Activated CD4-positive, alpha-beta T cell treated with anti-CD3 and anti-CD28 coated beads, Interleukin-2, amount 10 ng/mL, durations not matched to agents 24 days and 14 days (primary cell): ENCODE measurements at regions of chr5 and their contacts with region 1.

Region 1: DNA sequence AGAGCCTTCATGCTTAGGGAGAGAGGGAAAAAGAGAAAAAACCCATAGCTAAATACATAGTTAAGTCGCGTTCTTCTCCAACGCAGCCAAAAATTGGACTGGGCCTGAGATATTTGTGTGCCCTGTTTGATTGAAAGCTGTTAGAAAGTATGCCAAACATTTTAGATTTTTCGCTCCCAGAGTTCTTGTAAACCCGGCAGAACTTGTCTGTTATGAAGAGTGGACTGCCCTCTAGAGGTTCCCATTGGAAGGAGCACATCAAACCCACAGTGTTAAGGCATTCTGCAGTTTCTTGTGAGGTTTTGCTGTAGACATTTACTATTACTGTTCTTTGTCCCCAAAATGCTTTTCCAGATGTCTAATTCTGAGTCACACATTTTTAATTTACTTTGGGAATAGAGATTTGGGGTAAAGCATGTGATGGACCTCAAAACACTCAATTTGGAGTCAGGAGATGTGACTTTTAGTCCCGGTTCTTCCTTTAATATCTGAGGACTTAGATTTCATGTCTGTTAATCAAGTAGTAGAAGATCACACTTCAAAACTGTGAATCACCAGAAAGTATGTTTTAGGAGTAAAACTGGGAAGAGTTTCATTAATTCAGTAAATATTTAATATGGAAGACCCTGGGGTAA is 96.6 kb downstream of the PCSK1 start:
- DNase-seq: peak; percentile 89
- H3K4me3 Mint-ChIP-seq: no peak overlapping the region
- H3K27ac Mint-ChIP-seq: no peak overlapping the region
- H3K4me1 Mint-ChIP-seq: peaks cover 13% of the 10 kb centered on the region
- H3K27me3 Mint-ChIP-seq: peaks cover 12% of the 10 kb centered on the region

Region 2: GRCh38 chr5:95781101-95781583 is 555.3 kb before region 1 on chr5:
- intact Hi-C with region 1: loop called (anchors 5 kb)
- DNase-seq: peak; percentile 90
- H3K4me3 Mint-ChIP-seq: peak overlapping the region; percentile 56
- H3K27ac Mint-ChIP-seq: no peak overlapping the region
- H3K4me1 Mint-ChIP-seq: peaks cover 16% of the 10 kb centered on the region
- H3K27me3 Mint-ChIP-seq: peaks cover 7% of the 10 kb centered on the region

Region 3: GRCh38 chr5:95892780-95893354 is 443.6 kb before region 1 on chr5:
- intact Hi-C with region 1: loop called (anchors 1 kb)
- DNase-seq: peak; percentile 82
- H3K4me3 Mint-ChIP-seq: no peak overlapping the region
- H3K27ac Mint-ChIP-seq: no peak overlapping the region
- H3K4me1 Mint-ChIP-seq: peaks cover 16% of the 10 kb centered on the region
- H3K27me3 Mint-ChIP-seq: no peaks in the 10 kb centered on the region

Region 4: GRCh38 chr5:96113170-96113939 is 223.1 kb before region 1 on chr5:
- intact Hi-C with region 1: loop called (anchors 10 kb)
- DNase-seq: peak; percentile 59
- H3K4me3 Mint-ChIP-seq: no peak overlapping the region
- H3K27ac Mint-ChIP-seq: peak overlapping the region; percentile 76
- H3K4me1 Mint-ChIP-seq: peaks cover 11% of the 10 kb centered on the region
- H3K27me3 Mint-ChIP-seq: no peaks in the 10 kb centered on the region

Region 5: DNA sequence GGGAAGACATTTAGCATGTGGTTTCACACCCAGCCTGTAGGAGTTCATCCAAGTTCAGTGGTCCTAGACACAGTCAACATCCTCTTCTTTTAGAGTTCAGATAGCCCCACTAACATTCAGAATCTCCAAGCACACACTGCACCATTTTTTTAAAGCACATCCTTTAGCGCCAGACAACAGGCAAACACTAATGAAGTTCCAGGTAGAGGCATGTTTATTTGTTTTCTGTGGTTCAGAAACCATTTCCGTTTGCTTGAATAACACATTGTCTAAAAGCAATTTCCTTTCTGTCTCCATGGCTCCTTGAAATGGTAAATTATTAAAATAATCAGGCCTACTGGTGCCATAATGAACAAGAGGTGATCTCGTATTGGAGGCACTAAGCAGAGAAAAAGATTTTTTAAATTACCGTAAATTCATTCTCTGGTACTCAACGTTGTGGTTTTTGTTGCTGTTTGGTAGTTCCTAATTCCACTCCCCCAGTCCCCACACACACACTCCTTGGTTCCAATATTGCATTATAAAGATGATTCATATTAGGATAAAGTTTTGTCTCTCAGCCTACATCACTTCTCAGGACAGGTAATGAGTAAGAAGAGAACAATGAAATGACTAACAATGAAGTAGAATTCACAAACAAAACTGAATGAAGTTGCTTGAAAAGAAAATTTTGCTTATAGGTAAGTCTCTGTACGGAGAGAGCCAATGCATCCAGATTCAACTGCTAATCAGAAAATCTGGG is 56.5 kb before region 1 on chr5:
- intact Hi-C with region 1: loop called (anchors 2 kb)
- DNase-seq: no peak
- H3K4me3 Mint-ChIP-seq: peak overlapping the region; percentile 53
- H3K27ac Mint-ChIP-seq: peak overlapping the region; percentile 77
- H3K4me1 Mint-ChIP-seq: peaks cover 22% of the 10 kb centered on the region
- H3K27me3 Mint-ChIP-seq: peaks cover 6% of the 10 kb centered on the region

Region 6: GRCh38 chr5:96370976-96371375 is 34.5 kb after region 1 on chr5:
- intact Hi-C with region 1: no loop called
- DNase-seq: peak; percentile 8
- H3K4me3 Mint-ChIP-seq: no peak overlapping the region
- H3K27ac Mint-ChIP-seq: no peak overlapping the region
- H3K4me1 Mint-ChIP-seq: no peaks in the 10 kb centered on the region
- H3K27me3 Mint-ChIP-seq: peaks cover 26% of the 10 kb centered on the region